Activated CD4-positive, alpha-beta memory T cell treated with anti-CD3 and anti-CD28 coated beads for 36 hours (primary cell): ENCODE measurements at regions of chr7 and their contacts with region 1.

Region 1: DNA sequence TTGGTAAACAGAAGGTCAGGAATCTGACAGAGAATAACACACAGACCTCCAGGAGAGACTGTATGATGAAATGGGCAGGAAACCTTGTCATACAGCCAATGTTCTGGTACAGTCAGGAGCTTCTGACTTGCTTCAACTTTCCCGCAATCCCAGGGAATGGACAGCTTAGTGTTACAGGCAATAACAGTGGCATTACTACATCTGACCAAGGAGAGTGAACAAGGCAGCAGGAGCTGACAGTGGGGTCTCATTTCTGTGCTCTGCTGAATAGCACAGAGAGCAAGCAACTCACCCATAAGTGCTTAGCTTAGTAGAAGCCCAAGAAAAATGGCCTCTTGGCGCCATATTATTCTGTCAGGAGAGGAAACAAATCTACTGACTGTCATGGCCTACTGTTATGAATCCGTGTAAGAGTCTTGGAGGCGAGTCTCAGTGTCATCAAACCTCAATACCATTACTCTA is 186.2 kb upstream of the MTPN start:
- DNase-seq: no peak
- H3K4me3 Mint-ChIP-seq: no peak overlapping the region
- H3K27ac Mint-ChIP-seq: no peak overlapping the region
- H3K4me1 Mint-ChIP-seq: no peaks in the 10 kb centered on the region
- H3K27me3 Mint-ChIP-seq: no peaks in the 10 kb centered on the region

Region 2: GRCh38 chr7:136104269-136104603 is 59.1 kb before region 1 on chr7:
- CTCF ChIA-PET with region 1: no interaction called
- POLR2A ChIA-PET with region 1: no interaction called
- intact Hi-C with region 1: loop called (anchors 10 kb)
- DNase-seq: no peak
- H3K4me3 Mint-ChIP-seq: no peak overlapping the region
- H3K27ac Mint-ChIP-seq: no peak overlapping the region
- H3K4me1 Mint-ChIP-seq: no peaks in the 10 kb centered on the region
- H3K27me3 Mint-ChIP-seq: no peaks in the 10 kb centered on the region